Activated CD4-positive, alpha-beta T cell treated with anti-CD3 and anti-CD28 coated beads, Interleukin-2, amount 10 ng/mL, durations not matched to agents 24 days and 14 days (primary cell): ENCODE measurements at regions of chr2 and their contacts with region 1.

Region 1: GRCh38 chr2:70132244-70133126 is 45.2 kb downstream of the PCBP1 start:
- DNase-seq: peak; percentile 84
- H3K4me3 Mint-ChIP-seq: peak overlapping the region; percentile 91
- H3K27ac Mint-ChIP-seq: peak overlapping the region; percentile 99
- H3K4me1 Mint-ChIP-seq: peaks cover 72% of the 10 kb centered on the region
- H3K27me3 Mint-ChIP-seq: no peaks in the 10 kb centered on the region

Region 2: GRCh38 chr2:70094171-70094977 is 38.1 kb before region 1 on chr2:
- intact Hi-C with region 1: no loop called
- DNase-seq: no peak
- H3K4me3 Mint-ChIP-seq: peak overlapping the region; percentile 88
- H3K27ac Mint-ChIP-seq: peak overlapping the region; percentile 96
- H3K4me1 Mint-ChIP-seq: peaks cover 50% of the 10 kb centered on the region
- H3K27me3 Mint-ChIP-seq: no peaks in the 10 kb centered on the region

Region 3: GRCh38 chr2:70104231-70105111 is 28.0 kb before region 1 on chr2:
- intact Hi-C with region 1: loop called (anchors 1 kb)
- DNase-seq: peak; percentile 80
- H3K4me3 Mint-ChIP-seq: peak overlapping the region; percentile 72
- H3K27ac Mint-ChIP-seq: peak overlapping the region; percentile 89
- H3K4me1 Mint-ChIP-seq: peaks cover 48% of the 10 kb centered on the region
- H3K27me3 Mint-ChIP-seq: no peaks in the 10 kb centered on the region

Region 4: DNA sequence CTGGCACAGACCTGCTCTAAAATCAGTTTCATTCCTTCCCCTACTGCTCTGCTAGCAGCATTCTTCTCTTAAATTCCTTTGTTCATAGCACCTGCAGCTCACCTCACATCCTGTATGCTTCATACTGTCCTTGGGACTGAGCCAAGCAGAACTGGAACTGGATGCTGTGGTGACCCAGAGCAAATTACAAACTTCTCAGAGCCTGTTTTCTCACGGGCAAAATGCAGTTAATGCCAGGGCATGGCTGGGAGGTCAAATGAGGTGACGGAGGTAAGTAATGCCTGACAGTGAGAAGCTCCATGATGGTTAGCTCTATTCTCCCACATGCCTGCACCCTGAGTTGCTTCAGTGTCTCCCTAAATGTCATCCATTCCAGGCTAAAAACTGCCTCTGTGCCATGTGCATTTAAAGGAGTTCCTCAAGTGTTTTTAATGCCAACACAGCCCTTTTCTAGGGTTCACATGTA is 28.6 kb after region 1 on chr2:
- intact Hi-C with region 1: no loop called
- DNase-seq: peak; percentile 59
- H3K4me3 Mint-ChIP-seq: no peak overlapping the region
- H3K27ac Mint-ChIP-seq: peak overlapping the region; percentile 64
- H3K4me1 Mint-ChIP-seq: no peaks in the 10 kb centered on the region
- H3K27me3 Mint-ChIP-seq: no peaks in the 10 kb centered on the region

Region 5: GRCh38 chr2:70498054-70498453 is 365.6 kb after region 1 on chr2:
- intact Hi-C with region 1: no loop called
- DNase-seq: no peak
- H3K4me3 Mint-ChIP-seq: no peak overlapping the region
- H3K27ac Mint-ChIP-seq: no peak overlapping the region
- H3K4me1 Mint-ChIP-seq: no peaks in the 10 kb centered on the region
- H3K27me3 Mint-ChIP-seq: peaks cover 30% of the 10 kb centered on the region